Activated B cell treated with CpG ODN at 0.5 μM for 24 hours (primary cell): ENCODE measurements at regions of chr11 and their contacts with region 1.

Region 1: DNA sequence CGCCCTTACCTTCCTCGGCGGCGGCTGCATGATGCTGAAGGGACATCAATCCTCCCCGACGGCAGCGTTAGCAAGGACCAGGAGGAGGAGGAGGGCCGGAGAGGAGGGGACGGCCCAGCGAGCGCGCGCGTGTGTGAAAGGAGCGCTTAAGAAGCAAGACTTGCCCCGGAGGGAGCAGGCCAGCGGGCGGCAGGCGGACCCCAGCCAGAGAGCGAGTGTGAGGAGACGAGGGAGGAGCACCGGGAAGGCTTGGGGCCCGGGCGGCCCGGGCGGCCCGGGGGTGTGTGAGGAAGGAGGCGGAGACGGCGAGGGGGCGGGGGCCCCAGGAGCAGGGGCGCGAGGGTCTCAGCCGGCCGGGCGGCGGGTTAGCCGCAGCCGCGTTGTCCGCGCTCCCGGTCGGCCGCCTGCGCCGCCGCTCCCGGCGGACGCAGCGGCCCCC is 251 bp downstream of the FCHSD2 start:
- DNase-seq: no peak
- ATAC-seq: peak; percentile 22
- H3K4me3 Mint-ChIP-seq: peak overlapping the region; percentile 99
- H3K27ac Mint-ChIP-seq: peak overlapping the region; percentile 95
- H3K4me1 Mint-ChIP-seq: peaks cover 78% of the 10 kb centered on the region
- H3K27me3 Mint-ChIP-seq: no peaks in the 10 kb centered on the region
- CTCF ChIP-seq: no peak

Region 2: DNA sequence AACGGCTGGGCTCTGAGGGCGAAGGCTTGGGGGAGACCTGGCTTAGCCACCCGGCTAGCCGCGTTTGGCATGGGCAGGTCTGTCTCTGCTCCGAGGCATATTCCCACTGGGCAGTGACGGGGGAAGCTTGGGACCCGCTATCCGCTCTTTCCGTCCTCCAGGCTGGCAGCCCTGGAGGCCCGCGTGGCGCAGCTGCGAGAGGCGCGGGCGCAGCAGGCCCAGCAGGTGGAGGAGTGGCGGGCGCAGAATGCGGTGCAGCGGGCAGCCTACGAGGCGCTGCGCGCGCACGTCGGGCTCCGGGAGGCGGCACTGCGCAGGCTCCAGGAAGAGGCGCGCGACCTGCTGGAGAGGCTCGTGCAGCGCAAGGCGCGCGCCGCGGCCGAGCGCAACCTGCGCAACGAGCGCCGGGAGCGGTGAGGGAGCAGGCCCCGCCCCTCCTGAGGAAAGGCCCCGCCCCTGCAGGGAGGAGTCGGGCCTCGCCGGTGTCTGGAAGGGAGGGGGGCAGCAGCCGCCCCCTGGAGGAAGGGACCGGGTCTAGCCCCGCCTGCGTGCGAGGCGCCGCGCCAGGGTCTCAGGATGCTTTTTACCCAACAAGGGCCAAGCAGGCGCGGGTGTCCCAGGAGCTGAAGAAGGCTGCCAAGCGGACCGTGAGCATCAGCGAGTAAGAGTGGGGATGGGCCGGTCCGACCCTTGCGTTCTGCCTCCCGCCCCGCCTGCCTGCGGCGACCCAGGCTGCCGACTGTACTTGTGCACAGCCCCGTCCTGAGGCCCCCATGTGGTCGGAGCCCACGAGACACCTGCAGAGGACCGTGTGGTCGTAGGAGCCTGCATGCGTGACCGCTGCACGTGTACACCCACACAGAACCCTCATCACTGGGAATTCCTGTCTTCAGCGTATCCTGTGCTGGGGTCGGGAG is 319.7 kb before region 1 on chr11:
- CTCF ChIA-PET with region 1: no interaction called
- POLR2A ChIA-PET with region 1: interaction called, 4 read pairs
- intact Hi-C with region 1: loop called (anchors 2 kb)
- DNase-seq: peak; percentile 90
- ATAC-seq: peak; percentile 82
- H3K4me3 Mint-ChIP-seq: peak overlapping the region; percentile 63
- H3K27ac Mint-ChIP-seq: peak overlapping the region; percentile 95
- H3K4me1 Mint-ChIP-seq: peaks cover 57% of the 10 kb centered on the region
- H3K27me3 Mint-ChIP-seq: no peaks in the 10 kb centered on the region
- CTCF ChIP-seq: no peak

Region 3: GRCh38 chr11:72951193-72951592 is 190.7 kb before region 1 on chr11:
- CTCF ChIA-PET with region 1: no interaction called
- POLR2A ChIA-PET with region 1: interaction called, 10 read pairs
- intact Hi-C with region 1: no loop called
- DNase-seq: no peak
- ATAC-seq: no peak
- H3K4me3 Mint-ChIP-seq: peak overlapping the region; percentile 63
- H3K27ac Mint-ChIP-seq: peak overlapping the region; percentile 90
- H3K4me1 Mint-ChIP-seq: peaks cover 69% of the 10 kb centered on the region
- H3K27me3 Mint-ChIP-seq: no peaks in the 10 kb centered on the region
- CTCF ChIP-seq: no peak

Region 4: GRCh38 chr11:73126804-73127480 is 14.9 kb before region 1 on chr11:
- CTCF ChIA-PET with region 1: no interaction called
- POLR2A ChIA-PET with region 1: interaction called, 7 read pairs
- intact Hi-C with region 1: loop called (anchors 2 kb)
- DNase-seq: no peak
- ATAC-seq: no peak
- H3K4me3 Mint-ChIP-seq: no peak overlapping the region
- H3K27ac Mint-ChIP-seq: peak overlapping the region; percentile 32
- H3K4me1 Mint-ChIP-seq: peaks cover 58% of the 10 kb centered on the region
- H3K27me3 Mint-ChIP-seq: no peaks in the 10 kb centered on the region
- CTCF ChIP-seq: no peak

Region 5: DNA sequence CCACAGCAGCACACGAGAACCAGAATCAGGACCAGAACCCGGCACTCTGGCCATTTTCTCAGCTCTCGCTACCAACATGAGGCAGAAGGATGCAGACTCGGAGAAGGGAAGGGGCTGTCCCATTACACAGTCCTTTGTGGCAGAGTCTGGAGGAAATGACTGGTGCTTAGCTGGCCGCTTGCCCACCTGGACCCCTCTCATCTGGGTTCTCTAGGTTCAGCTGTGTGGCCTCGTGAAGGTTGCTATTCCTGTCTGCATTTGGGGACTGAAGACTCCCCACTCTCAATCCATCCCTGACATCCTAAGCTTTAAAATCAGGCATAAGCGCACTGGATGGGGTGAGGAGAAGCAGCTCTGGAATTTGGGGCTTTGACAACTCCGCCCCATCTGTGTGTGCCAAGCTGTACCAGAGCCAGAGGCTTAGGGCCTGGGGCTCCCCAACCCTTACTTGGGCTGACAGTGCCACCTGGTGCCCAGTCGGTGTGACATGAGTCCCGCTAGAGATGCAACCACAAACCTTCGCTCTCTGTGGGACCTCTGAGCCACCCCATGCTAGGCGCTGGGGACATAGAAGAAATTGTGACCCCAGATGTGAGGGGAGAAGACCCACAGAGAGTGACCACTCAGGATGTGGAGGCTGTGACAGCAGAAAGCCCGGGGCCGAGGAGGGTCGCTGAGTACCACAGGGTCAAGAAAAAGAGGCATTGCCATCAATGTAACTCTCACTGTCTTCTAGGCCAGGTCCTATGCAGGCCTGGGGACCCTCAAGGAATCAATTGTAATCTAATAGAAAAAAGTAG is 36.1 kb after region 1 on chr11:
- CTCF ChIA-PET with region 1: interaction called, 156 read pairs
- POLR2A ChIA-PET with region 1: interaction called, 145 read pairs
- intact Hi-C with region 1: loop called (anchors 1 kb)
- DNase-seq: peak; percentile 72
- ATAC-seq: peak; percentile 94
- H3K4me3 Mint-ChIP-seq: no peak overlapping the region
- H3K27ac Mint-ChIP-seq: peak overlapping the region; percentile 87
- H3K4me1 Mint-ChIP-seq: peaks cover 42% of the 10 kb centered on the region
- H3K27me3 Mint-ChIP-seq: no peaks in the 10 kb centered on the region
- CTCF ChIP-seq: peak; percentile 43